PC-3 (cell line): ENCODE measurements at regions of chr13 and their contacts with region 1.

Region 1: GRCh38 chr13:33228648-33229445 is 56.7 kb downstream of the STARD13 start:
- DNase-seq: peak; percentile 57
- ATAC-seq: 0 out of 2 replicates have a peak, but pooled peaks have one; percentile 18
- H3K4me3 ChIP-seq: no peak overlapping the region
- H3K27ac ChIP-seq: peak overlapping the region; percentile 94
- H3K4me1 ChIP-seq: peaks cover 39% of the 10 kb centered on the region
- H3K27me3 ChIP-seq: no peaks in the 10 kb centered on the region
- CTCF ChIP-seq: peak; percentile 90

Region 2: GRCh38 chr13:32525786-32526185 is 703.1 kb before region 1 on chr13:
- CTCF ChIA-PET with region 1: no interaction called
- POLR2A ChIA-PET with region 1: no interaction called
- intact Hi-C with region 1: no loop called
- DNase-seq: no peak
- ATAC-seq: no peak
- H3K4me3 ChIP-seq: no peak overlapping the region
- H3K27ac ChIP-seq: no peak overlapping the region
- H3K4me1 ChIP-seq: no peaks in the 10 kb centered on the region
- H3K27me3 ChIP-seq: no peaks in the 10 kb centered on the region
- CTCF ChIP-seq: no peak

Region 3: GRCh38 chr13:33334831-33335230 is 106.0 kb after region 1 on chr13:
- CTCF ChIA-PET with region 1: no interaction called
- POLR2A ChIA-PET with region 1: no interaction called
- intact Hi-C with region 1: no loop called
- DNase-seq: no peak
- ATAC-seq: no peak
- H3K4me3 ChIP-seq: no peak overlapping the region
- H3K27ac ChIP-seq: no peak overlapping the region
- H3K4me1 ChIP-seq: no peaks in the 10 kb centered on the region
- H3K27me3 ChIP-seq: no peaks in the 10 kb centered on the region
- CTCF ChIP-seq: no peak

Region 4: DNA sequence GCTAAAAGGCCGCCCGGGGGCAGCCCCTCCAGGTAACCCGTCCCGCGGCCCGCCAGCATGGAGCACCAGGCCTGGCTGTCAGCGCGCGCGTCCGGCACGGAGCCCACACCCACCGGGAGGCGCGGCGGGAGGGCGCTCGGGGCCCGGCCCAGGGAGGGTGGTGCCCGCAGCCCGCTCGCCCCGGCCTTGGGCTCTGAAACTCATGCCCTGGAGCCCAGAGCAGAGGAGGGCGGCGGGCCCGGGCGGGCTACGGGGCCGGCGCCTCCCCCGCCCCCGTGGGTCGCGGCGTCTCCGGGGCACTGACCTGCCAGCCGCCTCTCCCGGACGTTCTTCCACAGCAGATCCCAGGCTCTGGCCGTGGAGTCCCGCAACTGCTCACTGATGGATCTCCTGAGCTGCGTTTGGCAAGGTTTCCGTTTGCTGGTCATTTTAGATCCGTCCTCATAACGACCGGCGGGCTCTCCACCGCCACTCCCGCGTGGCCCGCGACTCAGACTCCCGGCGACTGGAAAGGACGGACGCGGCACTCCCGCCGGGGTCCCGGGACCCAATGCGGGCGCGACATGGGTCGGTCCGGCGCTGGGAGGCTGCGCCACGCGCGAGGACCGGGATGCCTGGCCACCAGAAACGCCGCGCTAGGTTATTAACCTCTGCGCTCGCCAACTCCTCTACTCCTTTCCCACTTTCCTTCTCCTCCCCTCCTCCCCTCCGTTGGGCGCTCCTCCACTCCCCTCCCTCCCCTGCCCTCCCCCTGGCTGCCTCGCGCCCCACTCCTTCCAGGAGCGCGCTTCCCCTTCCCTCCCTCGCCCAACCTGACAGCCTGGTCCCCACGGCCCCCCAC is 121.4 kb after region 1 on chr13:
- CTCF ChIA-PET with region 1: no interaction called
- POLR2A ChIA-PET with region 1: no interaction called
- intact Hi-C with region 1: loop called (anchors 2 kb)
- DNase-seq: peak; percentile 37
- ATAC-seq: peak; percentile 62
- H3K4me3 ChIP-seq: peak overlapping the region; percentile 96
- H3K27ac ChIP-seq: peak overlapping the region; percentile 26
- H3K4me1 ChIP-seq: peaks cover 31% of the 10 kb centered on the region
- H3K27me3 ChIP-seq: no peaks in the 10 kb centered on the region
- CTCF ChIP-seq: no peak

Region 5: DNA sequence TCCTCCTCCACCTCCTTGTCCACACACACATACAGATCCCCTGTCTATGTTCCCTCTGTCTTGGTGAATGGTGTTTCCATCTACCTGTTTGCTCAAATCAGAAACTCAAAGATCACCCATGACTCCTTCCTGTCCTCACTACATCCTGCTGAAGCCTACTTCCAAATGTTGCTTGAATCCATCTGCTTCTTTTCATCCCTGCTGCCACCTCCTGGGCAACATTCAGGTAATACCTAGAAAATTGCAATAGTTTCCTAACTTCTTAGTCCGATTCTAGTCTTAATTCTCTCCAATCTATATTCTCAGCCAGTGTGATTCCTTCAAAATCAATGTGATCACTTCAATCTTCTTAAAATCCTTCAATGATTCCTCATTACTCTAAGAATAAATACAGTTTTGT is 212.2 kb after region 1 on chr13:
- CTCF ChIA-PET with region 1: no interaction called
- POLR2A ChIA-PET with region 1: no interaction called
- intact Hi-C with region 1: loop called (anchors 1 kb)
- DNase-seq: peak; percentile 60
- ATAC-seq: peak; percentile 46; the same call in 1 of the 2 replicates
- H3K4me3 ChIP-seq: no peak overlapping the region
- H3K27ac ChIP-seq: no peak overlapping the region
- H3K4me1 ChIP-seq: peaks cover 20% of the 10 kb centered on the region
- H3K27me3 ChIP-seq: no peaks in the 10 kb centered on the region
- CTCF ChIP-seq: peak; percentile 64

Region 6: GRCh38 chr13:33487575-33488243 is 258.9 kb after region 1 on chr13:
- CTCF ChIA-PET with region 1: no interaction called
- POLR2A ChIA-PET with region 1: no interaction called
- intact Hi-C with region 1: loop called (anchors 5 kb)
- DNase-seq: peak; percentile 54
- ATAC-seq: peak; percentile 72
- H3K4me3 ChIP-seq: no peak overlapping the region
- H3K27ac ChIP-seq: no peak overlapping the region
- H3K4me1 ChIP-seq: no peaks in the 10 kb centered on the region
- H3K27me3 ChIP-seq: no peaks in the 10 kb centered on the region
- CTCF ChIP-seq: peak; percentile 62